ENCODE measurements at regions of chr2 and their contacts with region 1.

Region 1: DNA sequence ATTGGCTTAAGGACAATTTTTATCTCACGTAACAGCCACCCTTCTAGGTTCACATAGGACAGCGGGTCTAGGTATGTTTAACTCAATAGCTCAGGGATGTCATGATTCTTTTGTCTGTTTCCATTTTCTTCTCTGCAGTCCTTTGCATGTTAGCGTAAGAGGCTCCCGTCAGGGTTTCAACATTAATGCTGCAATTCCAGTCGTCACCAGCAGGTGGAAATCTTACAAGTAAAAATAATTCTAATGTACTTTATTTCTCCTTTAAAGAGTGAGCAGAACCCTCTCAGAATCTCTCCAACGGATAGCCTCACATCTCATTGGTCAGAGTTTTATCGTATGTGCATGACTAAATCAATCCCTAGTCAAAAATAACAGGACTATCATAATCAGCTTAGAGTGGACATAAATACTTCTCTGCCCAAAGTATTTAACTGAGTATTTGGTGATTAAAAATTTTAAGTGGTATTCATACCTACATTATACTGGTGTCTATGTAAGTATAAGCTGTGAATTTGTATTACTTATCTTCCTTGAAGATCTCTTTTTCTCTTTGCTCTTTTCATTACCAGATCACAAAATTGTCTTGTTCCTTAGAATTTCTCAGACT is 487.2 kb upstream of the GCFC2 start:
- DNase-seq: peak; percentile 65
- ATAC-seq: peak; percentile 53
- H3K4me3 ChIP-seq: no peak overlapping the region
- H3K27ac ChIP-seq: no peak overlapping the region
- H3K4me1 ChIP-seq: no peaks in the 10 kb centered on the region
- H3K27me3 ChIP-seq: no peaks in the 10 kb centered on the region
- CTCF ChIP-seq: peak; percentile 58
- POLR2A ChIP-seq: no peak
- RAD21 ChIP-seq: peak; percentile 32

Region 2: GRCh38 chr2:75632091-75632701 is 565.7 kb before region 1 on chr2:
- CTCF ChIA-PET with region 1: no interaction called
- POLR2A ChIA-PET with region 1: no interaction called
- dilution Hi-C with region 1: no loop called
- in situ Hi-C with region 1: no loop called
- intact Hi-C with region 1: no loop called
- DNase-seq: no peak
- ATAC-seq: no peak
- H3K4me3 ChIP-seq: no peak overlapping the region
- H3K27ac ChIP-seq: no peak overlapping the region
- H3K4me1 ChIP-seq: no peaks in the 10 kb centered on the region
- H3K27me3 ChIP-seq: peaks cover 12% of the 10 kb centered on the region
- CTCF ChIP-seq: no peak
- POLR2A ChIP-seq: no peak
- RAD21 ChIP-seq: no peak

Region 3: GRCh38 chr2:76211991-76212985 is 14.3 kb after region 1 on chr2:
- CTCF ChIA-PET with region 1: interaction called, 11 read pairs
- POLR2A ChIA-PET with region 1: no interaction called
- dilution Hi-C with region 1: no loop called
- in situ Hi-C with region 1: no loop called
- intact Hi-C with region 1: no loop called
- DNase-seq: no peak
- ATAC-seq: no peak
- H3K4me3 ChIP-seq: no peak overlapping the region
- H3K27ac ChIP-seq: no peak overlapping the region
- H3K4me1 ChIP-seq: no peaks in the 10 kb centered on the region
- H3K27me3 ChIP-seq: no peaks in the 10 kb centered on the region
- CTCF ChIP-seq: no peak
- POLR2A ChIP-seq: no peak
- RAD21 ChIP-seq: no peak